WTC11 (cell line): ENCODE measurements at regions of chr22 and their contacts with region 1.

Region 1: GRCh38 chr22:38051900-38052862 is 5.0 kb upstream of the PICK1 start:
- DNase-seq: peak; percentile 92
- ATAC-seq: peak; percentile 84
- H3K4me3 Mint-ChIP-seq: no peak overlapping the region
- H3K27ac Mint-ChIP-seq: peak overlapping the region; percentile 23; the same call in 1 of the 2 replicates
- H3K4me1 Mint-ChIP-seq: peaks cover 7% of the 10 kb centered on the region
- H3K27me3 Mint-ChIP-seq: no peaks in the 10 kb centered on the region; the same call in 1 of the 2 replicates
- CTCF ChIP-seq: peak; percentile 83

Region 2: DNA sequence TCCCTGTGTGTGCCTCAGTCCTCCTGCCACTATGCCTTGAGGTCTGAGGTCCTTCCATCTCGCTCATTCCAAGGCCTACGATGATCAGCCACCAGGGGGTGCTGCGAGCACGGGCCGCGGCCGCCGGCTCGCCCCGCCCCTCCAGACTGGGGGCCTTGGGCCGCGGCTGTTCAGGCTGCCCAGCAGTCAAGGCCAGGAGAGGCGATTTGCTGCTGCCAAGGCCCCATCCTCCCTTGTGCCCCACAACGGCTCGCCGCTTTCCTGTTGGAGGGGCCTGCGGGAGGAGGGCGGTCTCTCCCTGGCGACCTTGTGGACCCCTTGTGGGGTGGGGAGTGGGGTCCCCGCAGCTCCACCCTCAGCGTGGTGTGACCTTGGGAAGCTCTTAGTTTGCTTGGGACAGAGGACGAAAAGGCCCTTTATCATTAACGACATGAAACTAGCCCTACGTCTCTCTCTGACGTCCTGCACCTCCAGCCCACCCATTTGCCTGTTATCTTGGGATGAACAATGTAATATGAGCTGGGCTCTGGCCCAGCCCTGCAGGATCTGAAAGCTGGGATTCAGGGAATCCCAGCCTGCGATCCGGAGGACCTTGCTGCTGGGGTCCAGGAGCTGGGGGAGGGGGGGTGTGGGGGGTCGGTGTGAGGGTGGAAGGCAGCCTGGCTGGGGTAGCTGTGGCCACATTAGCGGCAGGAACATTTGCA is 234.3 kb before region 1 on chr22:
- CTCF ChIA-PET with region 1: interaction called, 11 read pairs
- POLR2A ChIA-PET with region 1: no interaction called
- DNase-seq: peak; percentile 94
- ATAC-seq: peak; percentile 78
- H3K4me3 Mint-ChIP-seq: peak overlapping the region; percentile 71
- H3K27ac Mint-ChIP-seq: peak overlapping the region; percentile 98
- H3K4me1 Mint-ChIP-seq: peaks cover 22% of the 10 kb centered on the region
- H3K27me3 Mint-ChIP-seq: peaks cover 39% of the 10 kb centered on the region
- CTCF ChIP-seq: peak; percentile 91

Region 3: GRCh38 chr22:38034274-38034882 is 17.8 kb before region 1 on chr22:
- CTCF ChIA-PET with region 1: interaction called, 58 read pairs
- POLR2A ChIA-PET with region 1: interaction called, 6 read pairs
- DNase-seq: peak; percentile 71
- ATAC-seq: peak; percentile 79
- H3K4me3 Mint-ChIP-seq: no peak overlapping the region
- H3K27ac Mint-ChIP-seq: peak overlapping the region; percentile 34
- H3K4me1 Mint-ChIP-seq: peaks cover 31% of the 10 kb centered on the region
- H3K27me3 Mint-ChIP-seq: no peaks in the 10 kb centered on the region; the same call in 1 of the 2 replicates
- CTCF ChIP-seq: no peak

Region 4: DNA sequence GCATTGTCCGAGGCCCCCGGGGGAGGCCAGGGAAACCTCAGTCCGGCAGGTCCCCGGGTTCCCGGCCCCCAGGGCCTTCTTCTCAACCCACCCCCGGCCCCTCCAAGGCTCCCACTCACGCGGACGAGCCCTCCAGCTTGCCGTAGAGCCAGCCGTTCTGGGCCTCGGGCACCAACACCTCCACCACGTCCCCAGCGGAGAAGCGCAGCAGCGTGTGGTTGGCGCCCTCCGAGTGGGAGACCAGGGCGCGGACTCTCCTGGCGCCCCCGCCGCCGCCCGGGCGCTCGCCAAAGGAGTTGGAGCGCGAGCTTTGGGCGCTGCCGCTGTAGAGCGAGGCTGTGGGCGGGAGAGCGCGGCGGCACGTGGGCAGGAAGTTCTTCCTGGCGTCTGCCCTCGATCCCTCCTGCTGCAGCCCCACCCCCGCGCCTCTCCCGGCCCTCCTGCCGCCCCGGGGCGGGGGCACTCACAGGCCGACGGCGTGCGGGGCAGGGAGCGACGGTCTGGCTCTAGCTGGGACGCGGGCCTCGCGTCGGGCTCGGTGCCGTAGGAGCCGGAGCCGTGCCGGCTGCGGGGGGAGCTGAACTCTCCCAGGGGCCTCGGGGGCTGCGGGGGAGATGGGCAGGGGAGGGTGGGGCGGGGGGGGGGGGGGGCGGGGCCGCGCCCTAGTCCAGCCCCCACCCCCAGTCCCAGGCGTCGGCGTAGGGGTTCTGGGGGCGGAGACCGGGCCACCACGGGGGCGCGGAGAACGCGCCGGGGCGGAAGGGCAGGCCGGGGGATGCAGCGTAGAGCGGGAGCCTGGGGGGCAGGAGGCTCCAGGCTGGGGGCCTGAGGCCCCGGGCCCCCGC is 36.7 kb after region 1 on chr22:
- CTCF ChIA-PET with region 1: interaction called, 19 read pairs
- POLR2A ChIA-PET with region 1: no interaction called
- DNase-seq: no peak
- ATAC-seq: peak; percentile 13; the same call in 1 of the 2 replicates
- H3K4me3 Mint-ChIP-seq: no peak overlapping the region
- H3K27ac Mint-ChIP-seq: no peak overlapping the region
- H3K4me1 Mint-ChIP-seq: peaks cover 5% of the 10 kb centered on the region; the same call in 1 of the 2 replicates
- H3K27me3 Mint-ChIP-seq: no peaks in the 10 kb centered on the region
- CTCF ChIP-seq: no peak

Region 5: GRCh38 chr22:38109371-38110001 is 57.3 kb after region 1 on chr22:
- CTCF ChIA-PET with region 1: interaction called, 91 read pairs
- POLR2A ChIA-PET with region 1: no interaction called
- DNase-seq: no peak
- ATAC-seq: no peak
- H3K4me3 Mint-ChIP-seq: no peak overlapping the region
- H3K27ac Mint-ChIP-seq: no peak overlapping the region
- H3K4me1 Mint-ChIP-seq: peaks cover 6% of the 10 kb centered on the region
- H3K27me3 Mint-ChIP-seq: no peaks in the 10 kb centered on the region; the same call in 1 of the 2 replicates
- CTCF ChIP-seq: no peak

Region 6: DNA sequence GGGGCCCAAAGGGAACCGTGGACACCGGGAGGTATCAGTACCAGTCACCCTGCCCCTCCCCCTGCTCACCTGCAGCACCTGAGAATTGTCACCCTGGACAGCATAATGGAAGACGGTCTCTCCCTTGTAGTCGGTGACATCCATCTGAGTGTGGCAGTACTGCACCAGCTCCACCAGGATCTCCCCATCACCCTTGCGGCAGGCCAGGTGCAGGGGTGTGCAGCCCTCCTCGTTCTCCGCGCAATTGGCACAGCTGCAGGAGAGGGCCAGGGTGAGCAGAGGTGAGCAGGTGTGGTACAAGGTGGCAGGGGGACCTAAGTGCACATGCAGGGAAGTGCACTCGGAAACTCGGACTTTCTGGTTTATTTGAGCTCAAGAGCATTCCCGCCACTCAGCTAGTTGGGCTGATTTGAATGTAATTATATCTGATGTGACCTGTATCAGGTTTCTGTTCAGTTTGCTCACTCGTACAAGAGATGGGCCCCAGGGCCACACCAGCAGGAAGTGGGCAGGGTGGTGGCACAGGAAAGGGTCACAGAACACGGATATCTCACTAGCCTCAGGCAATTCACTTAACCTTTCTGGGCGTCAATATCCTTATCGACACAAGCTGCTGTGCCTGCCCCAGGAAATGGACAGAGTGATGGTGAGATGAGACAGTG is 91.0 kb after region 1 on chr22:
- CTCF ChIA-PET with region 1: interaction called, 46 read pairs
- POLR2A ChIA-PET with region 1: interaction called, 3 read pairs
- DNase-seq: no peak
- ATAC-seq: no peak
- H3K4me3 Mint-ChIP-seq: no peak overlapping the region
- H3K27ac Mint-ChIP-seq: peak overlapping the region; percentile 43
- H3K4me1 Mint-ChIP-seq: peaks cover 9% of the 10 kb centered on the region
- H3K27me3 Mint-ChIP-seq: no peaks in the 10 kb centered on the region
- CTCF ChIP-seq: no peak

Region 7: DNA sequence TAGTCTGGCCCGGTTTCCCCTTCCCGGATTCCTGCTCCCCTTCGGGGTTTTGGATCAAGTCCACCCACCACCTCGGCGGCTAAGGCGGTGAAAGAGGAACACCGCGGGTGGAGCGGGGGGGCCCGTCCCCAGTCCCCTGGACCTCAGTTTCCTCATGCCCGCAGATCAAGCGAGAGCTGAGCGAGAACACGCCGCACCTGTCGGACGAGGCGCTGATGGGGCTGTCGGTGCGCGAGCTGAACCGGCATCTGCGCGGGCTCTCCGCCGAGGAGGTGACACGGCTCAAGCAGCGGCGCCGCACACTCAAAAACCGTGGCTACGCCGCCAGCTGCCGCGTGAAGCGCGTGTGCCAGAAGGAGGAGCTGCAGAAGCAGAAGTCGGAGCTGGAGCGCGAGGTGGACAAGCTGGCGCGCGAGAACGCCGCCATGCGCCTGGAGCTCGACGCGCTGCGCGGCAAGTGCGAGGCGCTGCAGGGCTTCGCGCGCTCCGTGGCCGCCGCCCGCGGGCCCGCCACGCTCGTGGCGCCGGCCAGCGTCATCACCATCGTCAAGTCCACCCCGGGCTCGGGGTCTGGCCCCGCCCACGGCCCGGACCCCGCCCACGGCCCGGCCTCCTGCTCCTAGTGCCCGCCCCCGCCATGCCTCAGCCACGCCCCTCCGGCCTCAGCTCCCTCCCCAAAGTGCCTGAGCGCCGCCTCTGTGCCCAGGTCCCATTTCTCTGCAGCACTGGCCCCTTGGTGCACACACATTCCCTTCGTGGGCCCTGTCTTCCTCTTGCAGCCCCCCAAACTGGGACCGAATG is 162.3 kb after region 1 on chr22:
- CTCF ChIA-PET with region 1: interaction called, 15 read pairs
- POLR2A ChIA-PET with region 1: no interaction called
- DNase-seq: peak; percentile 89
- ATAC-seq: peak; percentile 81
- H3K4me3 Mint-ChIP-seq: peak overlapping the region; percentile 68
- H3K27ac Mint-ChIP-seq: peak overlapping the region; percentile 70; the same call in 1 of the 2 replicates
- H3K4me1 Mint-ChIP-seq: peaks cover 23% of the 10 kb centered on the region
- H3K27me3 Mint-ChIP-seq: peaks cover 29% of the 10 kb centered on the region
- CTCF ChIP-seq: no peak